H1 (cell line): ENCODE measurements at regions of chr6 and their contacts with region 1.

Region 1: GRCh38 chr6:31541658-31542521 is at the start of gene DDX39B:
- DNase-seq: peak; percentile 89 to 90
- H3K4me3 ChIP-seq: peak within 1 kb of the TSS; percentile 75 to 99 (median 97)
- H3K27ac ChIP-seq: peak within 1 kb of the TSS; percentile 99
- H3K4me1 ChIP-seq: peaks cover 4 to 18% (median 10%) of the 10 kb centered on the region in 4 experiments; a peak in 5 of 7 replicates
- H3K27me3 ChIP-seq: no peaks in the 10 kb centered on the region
- CTCF ChIP-seq: no peak
- EP300 ChIP-seq: peak in 1 of 2 experiments; percentile 20; a peak in 1 of 3 replicates
- POLR2A ChIP-seq: peak; percentile 97 to 99
- RAD21 ChIP-seq: no peak
- total RNA-seq, gene DDX39B: 780 and 794 TPM in 2 replicates

Region 2: GRCh38 chr6:31479933-31480535 is 61.9 kb before region 1 on chr6:
- CTCF ChIA-PET with region 1: interaction called, 4 read pairs
- POLR2A ChIA-PET with region 1: interaction called, 10 read pairs
- DNase-seq: peak in 1 of 2 experiments; percentile 24
- H3K4me3 ChIP-seq: no peak overlapping the region
- H3K27ac ChIP-seq: no peak overlapping the region
- H3K4me1 ChIP-seq: no peaks in the 10 kb centered on the region
- H3K27me3 ChIP-seq: no peaks in the 10 kb centered on the region; a peak in 2 of 7 replicates
- CTCF ChIP-seq: no peak
- EP300 ChIP-seq: no peak
- POLR2A ChIP-seq: no peak
- RAD21 ChIP-seq: no peak

Region 3: DNA sequence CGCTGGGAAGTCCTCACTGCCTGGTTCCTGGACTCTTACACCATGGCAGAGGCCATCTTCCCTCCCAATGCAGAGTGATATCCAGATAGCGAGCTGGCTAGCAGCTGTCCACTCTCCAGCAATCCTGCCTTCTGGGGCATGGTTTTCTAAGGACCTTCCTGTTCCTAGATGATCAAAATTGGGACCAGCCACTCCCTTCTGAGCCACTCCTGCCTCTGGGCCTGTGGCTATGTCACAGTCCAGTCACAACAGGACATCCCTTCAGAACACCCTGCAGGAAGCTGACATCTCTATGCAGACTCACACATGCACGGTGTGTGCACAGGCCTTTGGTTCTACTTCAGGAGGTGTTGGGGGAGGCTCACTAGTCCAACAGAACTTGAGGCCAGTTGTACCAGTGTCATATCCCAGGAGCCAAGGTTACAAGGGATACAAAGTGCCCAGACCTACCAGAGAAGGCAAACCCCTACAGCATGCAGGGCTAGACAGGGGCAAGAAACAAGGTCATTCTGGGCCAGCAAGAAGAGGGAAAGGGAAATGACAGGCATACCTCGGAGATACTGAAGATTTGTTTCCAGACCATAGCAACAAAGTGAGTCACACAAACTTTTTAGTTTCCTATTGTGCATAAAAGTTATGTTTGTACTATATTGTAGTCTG is 15.8 kb before region 1 on chr6:
- CTCF ChIA-PET with region 1: interaction called, 4 read pairs
- POLR2A ChIA-PET with region 1: interaction called, 428 read pairs
- DNase-seq: no peak
- H3K4me3 ChIP-seq: no peak overlapping the region
- H3K27ac ChIP-seq: no peak overlapping the region; the same call in 1 of the 2 replicates
- H3K4me1 ChIP-seq: peaks cover 0 to 5% (median 3%) of the 10 kb centered on the region in 4 experiments; a peak in 3 of 7 replicates
- H3K27me3 ChIP-seq: no peaks in the 10 kb centered on the region
- CTCF ChIP-seq: no peak
- EP300 ChIP-seq: no peak
- POLR2A ChIP-seq: no peak
- RAD21 ChIP-seq: no peak

Region 4: GRCh38 chr6:31580807-31581433 is 39.0 kb after region 1 on chr6:
- CTCF ChIA-PET with region 1: interaction called, 254 read pairs
- POLR2A ChIA-PET with region 1: interaction called, 16 read pairs
- DNase-seq: peak; percentile 38 to 96
- H3K4me3 ChIP-seq: peak overlapping the region; percentile 54 to 89 (median 80)
- H3K27ac ChIP-seq: no peak overlapping the region
- H3K4me1 ChIP-seq: peaks cover 0 to 6% (median 6%) of the 10 kb centered on the region in 4 experiments; a peak in 6 of 7 replicates
- H3K27me3 ChIP-seq: peaks cover 0 to 8% (median 7%) of the 10 kb centered on the region in 4 experiments; a peak in 5 of 7 replicates
- CTCF ChIP-seq: peak in 2 of 3 experiments; percentile 89 to 93; a peak in 3 of 4 replicates
- EP300 ChIP-seq: no peak
- POLR2A ChIP-seq: 0 out of 3 replicates have a peak, but pooled peaks of 1 of the 2 experiments have one; percentile 18
- RAD21 ChIP-seq: peak; percentile 39 to 66

Region 5: GRCh38 chr6:31639449-31639861 is 97.6 kb after region 1 on chr6:
- CTCF ChIA-PET with region 1: interaction called, 3 read pairs
- POLR2A ChIA-PET with region 1: interaction called, 20 read pairs
- DNase-seq: no peak
- H3K4me3 ChIP-seq: no peak overlapping the region
- H3K27ac ChIP-seq: no peak overlapping the region
- H3K4me1 ChIP-seq: no peaks in the 10 kb centered on the region
- H3K27me3 ChIP-seq: no peaks in the 10 kb centered on the region
- CTCF ChIP-seq: no peak
- EP300 ChIP-seq: no peak
- POLR2A ChIP-seq: no peak
- RAD21 ChIP-seq: no peak

Region 6: DNA sequence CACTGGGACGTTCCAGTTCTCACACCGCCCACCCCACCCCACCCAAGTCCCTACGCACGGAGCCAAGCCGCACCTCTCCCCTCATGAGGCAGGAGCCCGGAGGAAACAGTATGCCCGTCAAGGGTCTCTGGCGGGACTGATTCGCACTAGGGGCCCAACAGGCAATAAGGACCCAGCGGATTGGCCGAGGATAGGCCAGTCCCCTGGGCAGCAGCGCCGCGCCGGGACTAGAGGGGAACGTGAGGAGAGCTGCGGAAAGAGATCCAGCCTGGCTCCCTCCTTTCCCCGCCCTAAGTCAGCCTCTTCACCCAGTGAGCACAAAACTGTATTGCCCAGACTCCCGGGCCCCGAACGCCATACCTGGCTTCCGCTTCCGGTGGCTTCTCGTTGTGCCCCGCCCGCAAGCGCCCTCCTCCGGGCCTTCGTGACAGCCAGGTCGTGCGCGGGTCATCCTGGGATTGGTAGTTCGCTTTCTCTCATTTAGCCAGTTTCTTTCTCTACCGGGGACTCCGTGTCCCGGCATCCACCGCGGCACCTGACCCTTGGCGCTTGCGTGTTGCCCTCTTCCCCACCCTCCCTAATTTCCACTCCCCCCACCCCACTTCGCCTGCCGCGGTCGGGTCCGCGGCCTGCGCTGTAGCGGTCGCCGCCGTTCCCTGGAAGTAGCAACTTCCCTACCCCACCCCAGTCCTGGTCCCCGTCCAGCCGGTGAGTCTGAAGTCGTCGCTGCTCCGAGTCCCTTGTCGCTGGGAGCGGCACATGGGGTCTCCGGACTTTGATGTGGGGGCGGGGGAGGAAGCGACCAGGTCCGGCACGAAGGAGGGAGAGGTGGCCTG is 123.8 kb after region 1 on chr6 and contains the start of gene CSNK2B:
- CTCF ChIA-PET with region 1: interaction called, 4 read pairs
- POLR2A ChIA-PET with region 1: interaction called, 48 read pairs
- DNase-seq: peak; percentile 88 to 91
- H3K4me3 ChIP-seq: peak within 1 kb of the TSS; percentile 88 to 94 (median 91)
- H3K27ac ChIP-seq: peak within 1 kb of the TSS; percentile 97
- H3K4me1 ChIP-seq: peaks cover 0 to 12% (median 4%) of the 10 kb centered on the region in 4 experiments; a peak in 5 of 7 replicates
- H3K27me3 ChIP-seq: no peaks in the 10 kb centered on the region
- CTCF ChIP-seq: no peak
- EP300 ChIP-seq: no peak
- POLR2A ChIP-seq: peak in 1 of 2 experiments; percentile 95; a peak in 2 of 3 replicates
- RAD21 ChIP-seq: no peak
- total RNA-seq, gene CSNK2B: 192 and 208 TPM in 2 replicates